Naive thymus-derived CD4-positive, alpha-beta T cell (primary cell): ENCODE measurements at regions of chr6 and their contacts with region 1.

Region 1: GRCh38 chr6:157946865-157947532 is 34.7 kb upstream of the SYNJ2 start:
- DNase-seq: peak in 6 of 9 donors; percentile 11 to 51 (median 32)
- ATAC-seq: peak; percentile 72
- H3K4me3 ChIP-seq: no peak overlapping the region
- H3K4me3 Mint-ChIP-seq: peak overlapping the region in 1 of 10 donors; percentile 42
- H3K27ac ChIP-seq: no peak overlapping the region
- H3K27ac Mint-ChIP-seq: peak overlapping the region in 8 of 9 donors; percentile 8 to 88 (median 52)
- H3K4me1 ChIP-seq: no peaks in the 10 kb centered on the region
- H3K4me1 Mint-ChIP-seq: peaks cover 0 to 24% (median 5%) of the 10 kb centered on the region in 7 donors
- H3K27me3 ChIP-seq: no peaks in the 10 kb centered on the region
- H3K27me3 Mint-ChIP-seq: peaks cover 0 to 20% (median 0%) of the 10 kb centered on the region in 5 donors

Region 2: DNA sequence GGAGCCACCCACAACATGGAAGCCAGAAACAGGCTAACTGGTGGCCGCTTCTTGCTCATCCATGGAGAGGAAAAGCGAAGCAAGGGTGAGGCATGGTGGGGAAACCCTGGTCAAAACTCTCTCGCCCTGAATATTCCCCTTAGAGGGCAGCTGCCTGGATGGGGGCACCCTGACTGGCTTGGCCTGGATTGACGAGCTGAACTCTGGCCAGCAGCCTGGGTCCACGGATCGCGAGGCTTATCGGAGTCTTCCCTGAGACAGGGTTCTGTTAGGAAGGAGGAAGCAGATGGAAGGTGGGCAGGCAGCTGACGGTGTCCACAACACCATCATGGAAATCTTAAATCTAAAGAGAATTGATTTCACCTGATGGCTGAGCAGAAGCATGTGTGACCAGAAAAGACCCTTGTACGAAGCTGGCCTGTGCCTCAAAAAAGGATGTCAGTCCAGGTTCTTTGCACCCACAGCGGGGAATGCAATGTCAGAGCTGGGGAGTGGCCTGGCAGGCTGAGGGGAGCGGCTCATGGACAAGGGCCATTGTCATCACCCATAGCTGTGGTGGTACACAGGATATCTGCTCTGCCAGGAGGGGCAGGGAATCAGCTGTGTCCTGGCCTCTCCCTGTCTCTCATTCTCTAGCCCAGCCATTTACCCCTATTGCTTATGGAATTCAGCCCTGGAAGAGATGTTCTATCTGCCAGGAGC is 233.4 kb before region 1 on chr6:
- CTCF ChIA-PET with region 1: no interaction called
- POLR2A ChIA-PET with region 1: no interaction called
- intact Hi-C with region 1: loop called in 1 of 2 experiments (anchors 1 kb)
- DNase-seq: no peak
- ATAC-seq: no peak
- H3K4me3 ChIP-seq: no peak overlapping the region
- H3K4me3 Mint-ChIP-seq: no peak overlapping the region
- H3K27ac ChIP-seq: no peak overlapping the region
- H3K27ac Mint-ChIP-seq: peak overlapping the region in 1 of 9 donors; percentile 36
- H3K4me1 ChIP-seq: no peaks in the 10 kb centered on the region
- H3K4me1 Mint-ChIP-seq: peaks cover 0 to 4% (median 0%) of the 10 kb centered on the region in 7 donors
- H3K27me3 ChIP-seq: no peaks in the 10 kb centered on the region
- H3K27me3 Mint-ChIP-seq: peaks cover 0 to 4% (median 0%) of the 10 kb centered on the region in 5 donors

Region 3: DNA sequence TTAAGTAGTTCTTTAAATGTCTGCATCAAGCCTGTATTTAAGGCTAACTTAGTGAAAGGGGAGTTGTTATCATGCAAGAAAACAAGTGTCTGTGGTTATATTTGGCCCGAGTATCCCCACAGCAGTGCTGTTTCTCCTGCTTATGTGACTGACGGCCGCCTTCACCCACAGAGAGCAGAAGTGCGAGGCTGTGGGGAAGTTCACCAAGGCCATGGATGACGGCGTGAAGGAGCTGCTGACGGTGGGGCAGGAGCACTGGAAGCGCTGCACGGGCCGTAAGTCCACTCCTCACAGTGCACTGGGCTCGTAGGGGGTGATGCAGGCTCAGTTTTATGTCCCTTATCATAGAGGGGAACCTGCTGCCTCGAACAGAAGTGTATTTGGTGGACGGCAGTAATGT is 18.6 kb before region 1 on chr6:
- CTCF ChIA-PET with region 1: no interaction called
- POLR2A ChIA-PET with region 1: no interaction called
- intact Hi-C with region 1: no loop called
- DNase-seq: no peak
- ATAC-seq: peak; percentile 59
- H3K4me3 ChIP-seq: no peak overlapping the region
- H3K4me3 Mint-ChIP-seq: no peak overlapping the region
- H3K27ac ChIP-seq: no peak overlapping the region
- H3K27ac Mint-ChIP-seq: no peak overlapping the region
- H3K4me1 ChIP-seq: no peaks in the 10 kb centered on the region
- H3K4me1 Mint-ChIP-seq: no peaks in the 10 kb centered on the region
- H3K27me3 ChIP-seq: no peaks in the 10 kb centered on the region
- H3K27me3 Mint-ChIP-seq: no peaks in the 10 kb centered on the region

Region 4: DNA sequence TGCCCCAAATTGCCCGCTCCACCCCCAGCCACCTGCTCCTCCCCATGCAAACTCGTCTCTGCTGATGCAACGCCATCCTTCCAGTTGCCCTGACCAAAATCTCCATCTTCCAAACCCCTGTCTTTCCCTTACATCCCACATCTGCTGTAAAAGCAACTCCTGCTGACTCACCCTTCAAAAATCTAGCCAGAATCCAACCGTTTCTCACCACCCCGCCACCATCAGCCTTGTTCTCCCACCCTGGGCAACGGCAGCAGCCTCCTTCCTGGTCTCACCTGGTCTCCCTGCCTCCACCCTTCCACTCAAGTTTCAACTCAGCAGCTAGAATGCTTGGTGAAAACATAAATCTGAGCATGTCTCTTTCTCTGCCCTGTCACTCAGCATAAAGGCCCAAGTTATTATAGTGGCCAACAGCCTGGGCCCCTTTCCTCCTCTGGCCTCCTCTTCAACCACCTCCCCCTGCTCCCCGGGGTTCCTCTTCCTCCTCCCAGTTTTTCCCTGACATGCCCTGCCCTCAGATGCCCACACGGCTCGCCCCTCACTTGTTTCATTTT is 27.4 kb after region 1 on chr6:
- CTCF ChIA-PET with region 1: no interaction called
- POLR2A ChIA-PET with region 1: no interaction called
- intact Hi-C with region 1: no loop called
- DNase-seq: no peak
- ATAC-seq: no peak
- H3K4me3 ChIP-seq: no peak overlapping the region
- H3K4me3 Mint-ChIP-seq: no peak overlapping the region
- H3K27ac ChIP-seq: no peak overlapping the region
- H3K27ac Mint-ChIP-seq: peak overlapping the region in 1 of 9 donors; percentile 62
- H3K4me1 ChIP-seq: peaks cover 0 to 2% of the 10 kb centered on the region in 2 donors
- H3K4me1 Mint-ChIP-seq: peaks cover 3 to 14% (median 6%) of the 10 kb centered on the region in 7 donors
- H3K27me3 ChIP-seq: no peaks in the 10 kb centered on the region
- H3K27me3 Mint-ChIP-seq: peaks cover 0 to 14% (median 0%) of the 10 kb centered on the region in 5 donors

Region 5: GRCh38 chr6:159540152-159540551 is 1593.2 kb after region 1 on chr6:
- CTCF ChIA-PET with region 1: no interaction called
- POLR2A ChIA-PET with region 1: no interaction called
- intact Hi-C with region 1: no loop called
- DNase-seq: no peak
- ATAC-seq: no peak
- H3K4me3 ChIP-seq: no peak overlapping the region
- H3K4me3 Mint-ChIP-seq: no peak overlapping the region
- H3K27ac ChIP-seq: no peak overlapping the region
- H3K27ac Mint-ChIP-seq: no peak overlapping the region
- H3K4me1 ChIP-seq: no peaks in the 10 kb centered on the region
- H3K4me1 Mint-ChIP-seq: no peaks in the 10 kb centered on the region
- H3K27me3 ChIP-seq: no peaks in the 10 kb centered on the region
- H3K27me3 Mint-ChIP-seq: peaks cover 0 to 18% (median 8%) of the 10 kb centered on the region in 5 donors